ENCODE measurements at regions of chr10 and their contacts with region 1.

Region 1: GRCh38 chr10:123241391-123242141 is 87.4 kb downstream of the BUB3 start:
- DNase-seq: peak; percentile 64
- H3K4me3 Mint-ChIP-seq: peak overlapping the region; percentile 7
- H3K27ac Mint-ChIP-seq: peak overlapping the region; percentile 86
- H3K4me1 Mint-ChIP-seq: peaks cover 26% of the 10 kb centered on the region
- H3K27me3 Mint-ChIP-seq: no peaks in the 10 kb centered on the region

Region 2: GRCh38 chr10:123287594-123288247 is 46.2 kb after region 1 on chr10:
- CTCF ChIA-PET with region 1: no interaction called
- intact Hi-C with region 1: loop called (anchors 1 kb)
- DNase-seq: peak; percentile 78
- H3K4me3 Mint-ChIP-seq: no peak overlapping the region
- H3K27ac Mint-ChIP-seq: peak overlapping the region; percentile 78
- H3K4me1 Mint-ChIP-seq: peaks cover 19% of the 10 kb centered on the region
- H3K27me3 Mint-ChIP-seq: peaks cover 2% of the 10 kb centered on the region

Measured in activated naive CD4-positive, alpha-beta T cell treated with anti-CD3 and anti-CD28 coated beads for 36 hours (primary cell).